Psoas muscle (tissue), 8 donors: ENCODE measurements at regions of chr17 and their contacts with region 1.

Region 1: GRCh38 chr17:15944759-15945529 is at the start of gene ADORA2B:
- DNase-seq: peak; percentile 66 to 71
- ATAC-seq: peak; percentile 72 to 87 (median 80)
- H3K4me3 ChIP-seq: peak within 1 kb of the TSS; percentile 69
- H3K27ac ChIP-seq: no peak within 1 kb of the TSS
- H3K4me1 ChIP-seq: no peaks in the 10 kb centered on the region
- H3K27me3 ChIP-seq: peaks cover 0 to 36% (median 8%) of the 10 kb centered on the region in 3 donors
- CTCF ChIP-seq: peak; percentile 48
- total RNA-seq, gene ADORA2B: 0.20 to 0.36 (median 0.29) TPM

Region 2: GRCh38 chr17:15909481-15909991 is 35.4 kb before region 1 on chr17:
- intact Hi-C with region 1: no loop called
- DNase-seq: no peak
- ATAC-seq: no peak
- H3K4me3 ChIP-seq: no peak overlapping the region
- H3K27ac ChIP-seq: no peak overlapping the region
- H3K4me1 ChIP-seq: no peaks in the 10 kb centered on the region
- H3K27me3 ChIP-seq: no peaks in the 10 kb centered on the region
- CTCF ChIP-seq: no peak

Region 3: DNA sequence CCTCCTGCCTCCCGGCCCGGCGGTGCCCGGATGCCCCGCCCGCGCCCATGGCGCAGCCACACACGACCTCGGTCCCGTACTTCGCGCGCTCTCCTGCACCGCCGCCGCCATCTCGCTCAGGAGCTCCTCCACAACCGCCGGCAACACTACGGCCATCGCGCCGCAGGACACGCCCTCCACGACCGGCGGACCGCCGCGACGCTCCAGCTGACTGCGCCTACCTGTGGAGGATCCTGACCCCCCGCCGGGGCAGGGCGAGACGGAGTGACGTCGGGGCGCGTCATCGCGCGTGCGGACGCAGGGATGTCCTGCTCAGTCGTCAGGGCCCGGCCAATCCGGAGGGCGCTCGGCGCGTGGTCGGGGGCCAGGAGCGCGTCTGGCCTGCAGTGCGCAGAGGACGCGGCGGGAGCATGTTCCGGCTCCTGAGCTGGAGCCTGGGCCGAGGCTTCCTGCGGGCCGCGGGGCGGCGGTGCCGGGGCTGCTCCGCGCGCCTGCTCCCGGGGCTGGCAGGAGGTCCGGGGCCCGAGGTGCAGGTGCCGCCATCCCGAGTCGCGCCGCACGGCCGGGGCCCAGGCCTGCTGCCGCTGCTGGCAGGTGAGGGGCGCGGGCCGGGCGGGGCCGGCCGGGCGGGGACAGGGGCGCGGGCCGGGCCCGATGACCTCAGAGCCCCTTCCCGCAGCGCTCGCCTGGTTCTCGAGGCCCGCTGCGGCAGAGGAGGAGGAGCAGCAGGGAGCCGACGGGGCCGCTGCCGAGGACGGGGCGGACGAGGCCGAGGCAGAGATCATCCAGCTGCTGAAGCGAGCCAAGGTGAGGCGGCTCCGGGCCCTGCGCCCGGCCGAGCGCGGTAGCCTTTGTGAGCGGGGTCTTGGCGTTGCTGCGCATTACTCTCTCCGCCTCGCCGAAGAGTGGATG is 54.8 kb after region 1 on chr17 and contains the starts of genes TTC19 and ZSWIM7:
- intact Hi-C with region 1: loop called in 1 of 2 experiments (anchors 2 kb)
- DNase-seq: peak; percentile 98
- ATAC-seq: peak; percentile 97 to 99 (median 98)
- H3K4me3 ChIP-seq: peak within 1 kb of the TSS; percentile 80
- H3K27ac ChIP-seq: peak within 1 kb of the TSS; percentile 92
- H3K4me1 ChIP-seq: peaks cover 19% of the 10 kb centered on the region
- H3K27me3 ChIP-seq: no peaks in the 10 kb centered on the region
- CTCF ChIP-seq: peak; percentile 16
- total RNA-seq, gene TTC19: 16.5 to 31.5 (median 29.0) TPM
- total RNA-seq, gene ZSWIM7: 29.1 to 46.6 (median 38.0) TPM